ENCODE measurements at regions of chr15 and their contacts with region 1.

Region 1: DNA sequence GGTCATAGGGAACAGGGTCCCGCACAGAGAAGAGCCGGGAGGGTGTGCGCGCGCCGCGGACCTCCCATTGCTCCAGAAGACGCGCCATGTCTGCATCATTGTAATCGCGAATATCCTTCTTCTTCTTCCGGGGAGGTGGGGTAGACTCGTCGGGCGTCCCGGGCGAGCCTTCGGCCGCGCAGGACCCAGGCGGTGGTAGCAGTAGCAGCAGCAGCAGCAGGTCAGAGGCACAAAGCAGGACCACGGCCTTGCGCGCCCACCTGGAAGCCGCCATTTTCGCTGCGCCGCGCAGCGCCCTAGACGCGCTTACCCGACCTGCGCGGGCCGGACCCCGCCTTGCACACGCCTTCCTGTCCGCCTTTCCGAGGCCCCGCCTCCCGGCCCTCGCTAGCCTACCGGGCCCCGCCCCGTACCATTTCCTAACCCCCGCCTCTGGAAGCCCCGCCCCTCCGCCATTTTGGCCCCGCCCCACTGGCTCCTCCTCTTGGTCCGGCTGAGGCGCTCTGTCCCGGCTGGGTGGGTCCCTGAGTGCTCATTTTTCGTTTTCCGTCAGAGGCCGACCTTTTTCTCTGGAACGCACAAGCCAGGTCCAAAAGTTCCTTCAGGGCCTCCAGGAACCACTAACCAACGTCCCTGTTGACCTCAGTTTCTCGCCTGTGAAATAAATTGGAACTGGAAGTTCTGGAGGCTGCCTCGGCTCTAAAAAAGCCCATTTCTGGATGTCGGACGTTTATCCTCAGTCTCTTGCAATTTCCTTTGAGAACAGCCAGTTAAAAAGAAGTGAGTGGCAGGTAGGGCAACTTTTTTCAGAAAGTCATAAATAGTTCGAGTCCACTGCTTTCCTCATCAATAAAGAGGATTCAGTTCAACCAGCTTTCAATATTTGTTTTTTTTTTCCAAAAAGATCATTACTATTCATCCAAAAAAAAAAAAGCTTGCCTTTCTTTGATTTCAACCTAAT is at the start of gene MESD:
- DNase-seq: peak; percentile 97 to 99 (median 98)
- H3K4me3 ChIP-seq: peak within 1 kb of the TSS; percentile 58 to 86 (median 74)
- H3K27ac ChIP-seq: peak within 1 kb of the TSS; percentile 86 to 94 (median 89)
- H3K4me1 ChIP-seq: peaks cover 21 to 36% of the 10 kb centered on the region in 2 donors
- H3K27me3 ChIP-seq: no peaks in the 10 kb centered on the region
- CTCF ChIP-seq: no peak
- POLR2A ChIP-seq: peak; percentile 77 to 95
- total RNA-seq, gene MESD: 13.2 to 50.3 (median 25.9) TPM

Region 2: GRCh38 chr15:81312790-81313543 is 323.2 kb after region 1 on chr15:
- intact Hi-C with region 1: loop called in 1 of 2 experiments (anchors 10 kb)
- DNase-seq: peak; percentile 86 to 96 (median 95)
- H3K4me3 ChIP-seq: no peak overlapping the region
- H3K27ac ChIP-seq: peak overlapping the region in 3 of 5 donors; percentile 22 to 74 (median 61)
- H3K4me1 ChIP-seq: peaks cover 8 to 14% of the 10 kb centered on the region in 2 donors
- H3K27me3 ChIP-seq: no peaks in the 10 kb centered on the region
- CTCF ChIP-seq: no peak
- POLR2A ChIP-seq: peak in 1 of 2 donors; percentile 14

Measured in adrenal gland (tissue), 19 donors.